ENCODE measurements at regions of chr16 and their contacts with region 1.

Region 1: GRCh38 chr16:67159593-67160406 is at the starts of genes FBXL8 and TRADD:
- DNase-seq: peak; percentile 90
- total RNA-seq, gene FBXL8: 9.2 to 13.0 TPM
- total RNA-seq, gene TRADD: 15.6 to 17.4 TPM

Region 2: DNA sequence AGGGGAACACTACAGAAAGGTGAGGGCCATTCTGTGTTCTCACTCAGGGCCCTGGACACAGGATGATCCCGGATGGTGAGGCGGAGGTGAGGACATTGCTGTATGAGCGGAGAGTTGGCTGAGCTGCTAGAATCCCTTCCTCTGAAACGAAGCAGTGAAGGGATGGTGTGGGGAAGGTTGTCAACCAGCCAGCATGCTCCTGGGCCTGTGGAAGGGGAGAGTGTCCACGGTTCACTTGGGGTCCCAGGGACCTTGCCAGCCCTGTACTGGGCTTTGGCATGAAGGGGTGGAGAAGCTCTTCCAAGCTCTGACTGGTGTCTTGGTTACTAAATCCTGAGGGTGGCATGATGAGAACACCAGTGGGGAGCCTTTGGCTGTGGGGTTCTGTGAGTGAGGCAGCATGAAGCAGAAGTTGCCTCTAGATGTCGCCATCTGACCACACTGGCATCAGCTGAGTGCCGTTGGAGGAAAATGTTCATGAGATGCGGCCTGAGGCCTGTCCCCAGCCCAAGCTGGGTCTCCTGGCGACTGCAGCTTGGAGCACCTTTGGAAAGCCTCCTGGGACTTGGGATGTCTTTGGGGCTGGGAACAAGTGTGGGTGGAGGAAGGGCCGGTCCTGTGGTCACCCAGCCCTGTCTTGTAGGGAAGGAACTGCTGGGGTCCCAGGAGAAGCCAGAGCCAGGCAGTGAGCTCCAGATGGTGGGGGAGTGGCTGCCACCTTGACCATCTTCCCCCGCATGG is 264.7 kb before region 1 on chr16:
- intact Hi-C with region 1: loop called in 1 of 2 experiments (anchors 5 kb)
- DNase-seq: no peak

Region 3: GRCh38 chr16:66948837-66949225 is 211.0 kb before region 1 on chr16:
- intact Hi-C with region 1: loop called in 1 of 2 experiments (anchors 1 kb)
- DNase-seq: no peak

Region 4: GRCh38 chr16:66977341-66978113 is 182.3 kb before region 1 on chr16:
- intact Hi-C with region 1: loop called (anchors 2 to 5 kb)
- DNase-seq: peak; percentile 96

Region 5: DNA sequence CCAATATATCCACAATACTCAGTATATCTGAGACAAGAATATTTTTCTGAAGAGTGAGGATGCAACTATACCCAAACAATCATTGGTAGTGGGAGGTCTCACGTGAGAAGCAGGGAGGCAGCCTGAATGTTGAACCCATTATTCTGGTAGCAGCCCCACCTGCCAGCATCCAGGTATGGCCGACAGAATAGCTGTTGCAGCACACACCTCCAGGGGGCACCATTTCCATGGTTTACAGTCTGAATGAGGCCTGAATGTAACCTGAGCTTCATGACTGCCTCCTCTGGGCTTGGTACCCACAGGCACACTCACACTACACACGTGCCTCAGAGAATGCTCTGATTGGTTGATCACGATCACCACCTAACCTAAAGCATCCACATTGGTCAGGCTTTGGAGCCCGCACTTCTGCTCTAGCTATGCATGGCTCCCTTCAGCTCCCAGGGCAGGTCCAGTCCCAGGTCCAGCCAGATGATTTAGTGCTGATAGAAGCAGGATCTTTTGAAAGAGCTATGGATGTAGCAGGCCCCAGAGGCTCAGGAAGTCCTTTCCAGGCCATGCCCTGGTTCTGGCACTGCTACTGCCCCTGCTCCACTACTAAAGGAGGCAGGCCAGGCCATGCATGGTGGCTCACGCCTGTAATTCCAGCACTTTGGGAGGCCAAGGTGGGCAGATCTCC is 141.9 kb before region 1 on chr16:
- intact Hi-C with region 1: loop called in 1 of 2 experiments (anchors 1 kb)
- DNase-seq: peak; percentile 87